Ovary (tissue), 10 donors: ENCODE measurements at regions of chr6 and their contacts with region 1.

Region 1: DNA sequence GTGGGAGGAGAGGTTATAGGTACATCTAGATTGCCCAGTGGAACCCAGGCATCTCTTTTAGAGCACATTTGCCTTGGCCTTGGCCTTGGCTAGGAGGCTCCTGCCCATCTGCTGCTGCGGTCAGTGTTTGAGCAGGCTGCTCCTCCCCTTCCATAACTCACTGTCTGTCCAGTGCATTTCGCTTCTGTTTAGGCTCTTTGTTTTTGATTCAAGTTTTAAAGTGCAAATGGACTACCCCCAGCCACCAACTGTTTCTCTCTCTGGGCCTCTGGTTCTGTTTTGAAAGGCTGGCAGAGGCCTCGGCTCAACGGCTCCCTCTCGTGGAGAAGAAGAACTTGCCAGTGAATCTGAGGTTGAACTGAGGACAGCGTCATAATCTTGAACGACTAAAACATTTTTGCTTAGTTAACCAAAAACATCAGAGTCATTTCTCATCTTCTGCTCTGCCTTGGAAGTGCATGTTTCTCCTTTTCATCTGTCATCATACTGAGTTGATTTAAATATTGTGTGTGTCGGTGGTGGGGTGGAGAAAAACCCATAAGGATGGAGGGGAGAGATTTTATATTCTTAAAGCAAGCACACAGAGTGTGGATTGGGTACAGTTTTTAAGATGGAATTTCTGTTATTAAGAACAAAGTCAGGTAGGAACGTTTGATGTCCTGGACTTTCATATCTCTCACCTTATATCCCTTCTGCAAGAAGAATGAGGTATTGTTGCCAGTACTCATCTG is 171.4 kb downstream of the DTNBP1 start:
- DNase-seq: peak; percentile 76 to 88 (median 83)
- H3K4me3 ChIP-seq: no peak overlapping the region
- H3K27ac ChIP-seq: peak overlapping the region in 1 of 2 donors; percentile 14
- H3K4me1 ChIP-seq: peaks cover 15% of the 10 kb centered on the region
- H3K27me3 ChIP-seq: no peaks in the 10 kb centered on the region
- CTCF ChIP-seq: peak; percentile 85 to 98 (median 87)
- EP300 ChIP-seq: no peak
- POLR2A ChIP-seq: no peak

Region 2: GRCh38 chr6:14129575-14129974 is 1361.8 kb before region 1 on chr6:
- intact Hi-C with region 1: loop called in 1 of 4 experiments (anchors 10 kb)
- DNase-seq: peak; percentile 43 to 59 (median 55)
- H3K4me3 ChIP-seq: no peak overlapping the region
- H3K27ac ChIP-seq: peak overlapping the region in 1 of 2 donors; percentile 20
- H3K4me1 ChIP-seq: peaks cover 2% of the 10 kb centered on the region
- H3K27me3 ChIP-seq: no peaks in the 10 kb centered on the region
- CTCF ChIP-seq: peak; percentile 19 to 52 (median 31)
- EP300 ChIP-seq: no peak
- POLR2A ChIP-seq: no peak

Region 3: GRCh38 chr6:15232836-15233510 is 258.4 kb before region 1 on chr6:
- intact Hi-C with region 1: no loop called
- DNase-seq: no peak
- H3K4me3 ChIP-seq: no peak overlapping the region
- H3K27ac ChIP-seq: no peak overlapping the region
- H3K4me1 ChIP-seq: no peaks in the 10 kb centered on the region
- H3K27me3 ChIP-seq: no peaks in the 10 kb centered on the region
- CTCF ChIP-seq: no peak
- EP300 ChIP-seq: no peak
- POLR2A ChIP-seq: no peak